Activated CD8-positive, alpha-beta T cell treated with anti-CD3 and anti-CD28 coated beads for 36 hours (primary cell): ENCODE measurements at regions of chr15 and their contacts with region 1.

Region 1: GRCh38 chr15:49155110-49155833 is at the start of gene COPS2:
- DNase-seq: peak; percentile 97
- ATAC-seq: peak; percentile 96
- H3K4me3 Mint-ChIP-seq: peak within 1 kb of the TSS; percentile 99
- H3K27ac Mint-ChIP-seq: peak within 1 kb of the TSS; percentile 98
- H3K4me1 Mint-ChIP-seq: peaks cover 37% of the 10 kb centered on the region
- H3K27me3 Mint-ChIP-seq: no peaks in the 10 kb centered on the region
- CTCF ChIP-seq: no peak
- total RNA-seq, gene COPS2: 85.0 to 85.8 TPM

Region 2: GRCh38 chr15:49064281-49064653 is 91.0 kb before region 1 on chr15:
- CTCF ChIA-PET with region 1: no interaction called
- POLR2A ChIA-PET with region 1: no interaction called
- intact Hi-C with region 1: no loop called
- DNase-seq: no peak
- ATAC-seq: no peak
- H3K4me3 Mint-ChIP-seq: no peak overlapping the region
- H3K27ac Mint-ChIP-seq: no peak overlapping the region
- H3K4me1 Mint-ChIP-seq: peaks cover 7% of the 10 kb centered on the region
- H3K27me3 Mint-ChIP-seq: peaks cover 1% of the 10 kb centered on the region
- CTCF ChIP-seq: no peak

Region 3: DNA sequence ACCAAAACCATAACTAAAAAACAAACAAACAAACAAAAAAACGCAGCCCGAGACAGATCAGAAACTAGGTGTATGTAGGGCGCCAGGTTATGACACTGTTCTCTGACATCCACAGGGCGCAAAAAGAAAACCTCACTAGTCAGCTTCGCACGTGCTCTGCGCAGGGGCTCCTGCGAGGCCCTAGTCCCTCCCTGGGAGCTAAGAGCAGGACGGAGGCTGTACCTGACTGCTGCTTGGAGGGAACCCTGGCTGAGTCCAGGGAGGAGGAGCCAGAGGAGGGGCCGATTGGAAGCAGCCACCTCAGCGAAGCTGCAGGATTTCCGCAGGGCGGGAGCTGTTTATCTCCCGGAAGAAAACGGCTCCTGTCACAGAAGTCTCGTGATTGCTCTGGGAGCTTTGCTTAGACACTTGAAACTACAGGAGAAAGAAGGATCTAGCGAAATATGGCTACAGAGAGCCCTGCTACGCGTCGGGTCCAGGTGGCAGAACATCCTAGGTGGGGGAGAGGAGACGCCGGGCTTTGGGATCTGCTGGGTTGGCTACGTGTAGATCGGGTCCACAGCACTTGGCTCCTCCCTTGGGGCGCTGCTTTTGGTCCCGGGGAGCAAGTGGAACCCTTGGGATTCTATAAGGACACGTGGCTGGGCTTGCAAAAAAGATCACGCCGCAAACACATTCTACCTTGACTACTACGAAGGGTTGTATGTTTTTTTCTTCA is 14.8 kb after region 1 on chr15 and contains the start of gene GALK2:
- CTCF ChIA-PET with region 1: interaction called, 6 read pairs
- POLR2A ChIA-PET with region 1: interaction called, 18 read pairs
- intact Hi-C with region 1: no loop called
- DNase-seq: peak; percentile 85
- ATAC-seq: peak; percentile 99
- H3K4me3 Mint-ChIP-seq: peak within 1 kb of the TSS; percentile 89
- H3K27ac Mint-ChIP-seq: peak within 1 kb of the TSS; percentile 96
- H3K4me1 Mint-ChIP-seq: peaks cover 27% of the 10 kb centered on the region
- H3K27me3 Mint-ChIP-seq: no peaks in the 10 kb centered on the region
- CTCF ChIP-seq: no peak
- total RNA-seq, gene GALK2: 26.8 to 27.5 TPM